Endothelial cell of umbilical vein (primary cell): ENCODE measurements at regions of chrX and their contacts with region 1.

Region 1: GRCh38 chrX:54639346-54640102 is 109.5 kb downstream of the GNL3L start:
- DNase-seq: peak; percentile 97
- H3K4me3 ChIP-seq: peak overlapping the region; percentile 35 to 73 (median 40)
- H3K27ac ChIP-seq: peak overlapping the region; percentile 98
- H3K4me1 ChIP-seq: peaks cover 6% of the 10 kb centered on the region
- H3K27me3 ChIP-seq: no peaks in the 10 kb centered on the region
- CTCF ChIP-seq: peak; percentile 61 to 79
- POLR2A ChIP-seq: peak; percentile 46

Region 2: GRCh38 chrX:54044126-54044876 is 595.2 kb before region 1 on chrX and contains the start of gene PHF8:
- CTCF ChIA-PET with region 1: no interaction called
- POLR2A ChIA-PET with region 1: no interaction called
- dilution Hi-C with region 1: no loop called
- intact Hi-C with region 1: loop called (anchors 5 kb)
- DNase-seq: peak; percentile 95
- H3K4me3 ChIP-seq: peak within 1 kb of the TSS; percentile 66 to 87 (median 70)
- H3K27ac ChIP-seq: peak within 1 kb of the TSS; percentile 81
- H3K4me1 ChIP-seq: peaks cover 13% of the 10 kb centered on the region
- H3K27me3 ChIP-seq: no peaks in the 10 kb centered on the region
- CTCF ChIP-seq: no peak
- POLR2A ChIP-seq: peak; percentile 70
- total RNA-seq, gene PHF8: 23.2 and 25.5 TPM in 2 replicates

Region 3: DNA sequence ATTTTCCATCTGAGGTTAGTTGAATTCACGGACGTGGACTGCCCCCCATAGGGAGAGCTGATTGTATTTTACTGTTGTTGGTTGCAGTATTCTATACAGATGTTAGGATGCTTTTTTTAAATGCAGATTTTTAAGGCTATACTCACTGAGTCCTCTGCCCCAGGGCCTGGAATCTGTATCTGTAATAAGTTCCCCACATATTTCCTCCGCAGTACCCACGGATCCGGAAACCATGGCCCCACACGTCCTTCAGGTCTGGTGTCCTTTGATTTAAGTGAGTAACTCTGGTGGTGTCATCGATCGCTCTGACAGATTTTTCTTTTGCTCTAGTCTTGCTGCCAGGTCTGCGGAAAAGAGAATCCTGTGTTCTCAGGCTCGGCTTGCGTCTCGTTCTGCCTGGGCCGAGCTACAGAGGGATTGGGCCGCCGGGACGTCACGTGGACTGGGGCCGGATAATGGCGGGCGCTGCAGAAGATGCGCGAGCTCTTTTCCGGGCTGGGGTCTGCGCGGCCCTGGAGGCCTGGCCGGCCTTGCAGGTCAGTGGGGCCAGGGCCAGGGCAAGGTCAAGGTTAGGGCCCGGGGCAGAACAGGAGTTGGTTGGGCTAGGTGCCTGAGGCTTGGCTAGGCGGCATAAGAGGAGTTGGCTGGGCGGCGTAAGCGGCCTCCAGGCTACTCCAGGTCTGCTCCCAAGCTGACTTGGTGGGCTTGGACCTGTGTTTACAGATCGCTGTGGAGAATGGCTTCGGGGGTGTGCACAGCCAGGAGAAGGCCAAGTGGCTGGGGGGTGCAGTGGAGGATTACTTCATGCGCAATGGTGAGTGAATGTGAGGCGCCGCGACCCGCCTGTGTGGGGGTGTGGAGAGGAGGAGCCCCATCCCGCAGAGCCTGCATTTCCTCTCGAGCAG is 199.3 kb before region 1 on chrX and contains the start of gene TSR2:
- CTCF ChIA-PET with region 1: no interaction called
- POLR2A ChIA-PET with region 1: no interaction called
- dilution Hi-C with region 1: no loop called
- intact Hi-C with region 1: loop called (anchors 2 kb)
- DNase-seq: peak; percentile 87
- H3K4me3 ChIP-seq: peak within 1 kb of the TSS; percentile 89 to 97 (median 94)
- H3K27ac ChIP-seq: peak within 1 kb of the TSS; percentile 45
- H3K4me1 ChIP-seq: peaks cover 12% of the 10 kb centered on the region
- H3K27me3 ChIP-seq: no peaks in the 10 kb centered on the region
- CTCF ChIP-seq: peak in 1 of 2 donors; percentile 8
- POLR2A ChIP-seq: peak; percentile 28
- total RNA-seq, gene TSR2: 22.8 and 25.1 TPM in 2 replicates

Region 4: GRCh38 chrX:54551801-54552200 is 87.7 kb before region 1 on chrX:
- CTCF ChIA-PET with region 1: no interaction called
- POLR2A ChIA-PET with region 1: no interaction called
- dilution Hi-C with region 1: no loop called
- intact Hi-C with region 1: no loop called
- DNase-seq: no peak
- H3K4me3 ChIP-seq: no peak overlapping the region
- H3K27ac ChIP-seq: no peak overlapping the region
- H3K4me1 ChIP-seq: no peaks in the 10 kb centered on the region
- H3K27me3 ChIP-seq: no peaks in the 10 kb centered on the region
- CTCF ChIP-seq: no peak
- POLR2A ChIP-seq: no peak

Region 5: GRCh38 chrX:54891573-54891972 is 252.0 kb after region 1 on chrX:
- CTCF ChIA-PET with region 1: interaction called, 11 read pairs
- POLR2A ChIA-PET with region 1: no interaction called
- dilution Hi-C with region 1: no loop called
- intact Hi-C with region 1: no loop called
- DNase-seq: peak; percentile 40
- H3K4me3 ChIP-seq: no peak overlapping the region
- H3K27ac ChIP-seq: no peak overlapping the region
- H3K4me1 ChIP-seq: no peaks in the 10 kb centered on the region
- H3K27me3 ChIP-seq: no peaks in the 10 kb centered on the region
- CTCF ChIP-seq: peak; percentile 23 to 38
- POLR2A ChIP-seq: no peak

Region 6: DNA sequence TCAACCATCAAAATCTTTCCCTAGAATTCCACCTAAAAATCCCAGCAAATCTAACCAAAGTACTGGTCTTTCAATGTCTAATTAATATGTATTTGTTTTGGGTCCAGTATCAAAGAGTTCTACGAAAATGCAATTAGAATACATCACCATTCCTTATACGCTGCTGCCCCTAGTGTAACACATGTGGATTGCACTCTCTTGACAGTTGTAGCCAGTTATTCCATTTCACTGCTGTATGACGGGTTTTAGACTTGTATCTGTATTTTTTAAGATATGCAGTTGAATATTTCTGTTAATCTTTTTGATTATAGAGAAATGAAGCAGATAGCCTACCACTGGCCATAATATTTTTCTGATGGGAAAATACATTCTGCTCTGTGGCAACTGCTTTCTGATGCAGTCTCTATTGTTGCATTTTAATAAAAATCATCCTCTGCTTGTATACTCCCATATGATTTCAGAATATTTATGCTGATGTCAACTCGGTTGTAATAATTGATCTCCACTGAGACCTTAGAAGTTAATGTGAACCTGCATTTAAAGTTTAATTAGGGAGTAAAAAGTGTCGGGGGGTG is 418.2 kb after region 1 on chrX:
- CTCF ChIA-PET with region 1: interaction called, 11 read pairs
- POLR2A ChIA-PET with region 1: no interaction called
- dilution Hi-C with region 1: no loop called
- intact Hi-C with region 1: loop called (anchors 1 kb)
- DNase-seq: peak; percentile 65
- H3K4me3 ChIP-seq: peak overlapping the region in 1 of 3 experiments; percentile 15
- H3K27ac ChIP-seq: peak overlapping the region; percentile 87
- H3K4me1 ChIP-seq: peaks cover 4% of the 10 kb centered on the region
- H3K27me3 ChIP-seq: no peaks in the 10 kb centered on the region
- CTCF ChIP-seq: peak; percentile 45 to 54
- POLR2A ChIP-seq: no peak

Region 7: GRCh38 chrX:55326985-55327384 is 687.5 kb after region 1 on chrX:
- CTCF ChIA-PET with region 1: no interaction called
- POLR2A ChIA-PET with region 1: no interaction called
- dilution Hi-C with region 1: no loop called
- intact Hi-C with region 1: loop called (anchors 10 kb)
- DNase-seq: peak; percentile 85
- H3K4me3 ChIP-seq: no peak overlapping the region
- H3K27ac ChIP-seq: no peak overlapping the region
- H3K4me1 ChIP-seq: no peaks in the 10 kb centered on the region
- H3K27me3 ChIP-seq: no peaks in the 10 kb centered on the region
- CTCF ChIP-seq: no peak
- POLR2A ChIP-seq: no peak